ENCODE measurements at regions of chr3 and their contacts with region 1.

Region 1: GRCh38 chr3:43036621-43037423 is 57.7 kb downstream of the GASK1A start:
- DNase-seq: peak; percentile 40 to 56
- ATAC-seq: peak; percentile 91 to 97 (median 92)
- H3K4me3 ChIP-seq: no peak overlapping the region
- H3K4me3 Mint-ChIP-seq: peak overlapping the region; percentile 53
- H3K27ac ChIP-seq: peak overlapping the region; percentile 70
- H3K27ac Mint-ChIP-seq: peak overlapping the region; percentile 87 to 91
- H3K4me1 ChIP-seq: peaks cover 28% of the 10 kb centered on the region
- H3K4me1 Mint-ChIP-seq: peaks cover 31 to 32% of the 10 kb centered on the region in 2 donors
- H3K27me3 ChIP-seq: no peaks in the 10 kb centered on the region
- H3K27me3 Mint-ChIP-seq: no peaks in the 10 kb centered on the region
- CTCF ChIP-seq: no peak

Region 2: GRCh38 chr3:42957573-42957972 is 79.2 kb before region 1 on chr3:
- intact Hi-C with region 1: no loop called
- DNase-seq: no peak
- ATAC-seq: no peak
- H3K4me3 ChIP-seq: no peak overlapping the region
- H3K4me3 Mint-ChIP-seq: no peak overlapping the region
- H3K27ac ChIP-seq: no peak overlapping the region
- H3K27ac Mint-ChIP-seq: no peak overlapping the region
- H3K4me1 ChIP-seq: no peaks in the 10 kb centered on the region
- H3K4me1 Mint-ChIP-seq: peaks cover 0 to 5% of the 10 kb centered on the region in 2 donors
- H3K27me3 ChIP-seq: no peaks in the 10 kb centered on the region
- H3K27me3 Mint-ChIP-seq: peaks cover 8 to 13% of the 10 kb centered on the region in 2 donors
- CTCF ChIP-seq: no peak

Region 3: GRCh38 chr3:43024181-43024885 is 12.5 kb before region 1 on chr3:
- intact Hi-C with region 1: loop called (anchors 1 kb)
- DNase-seq: peak; percentile 41 to 78
- ATAC-seq: peak; percentile 88 to 93 (median 88)
- H3K4me3 ChIP-seq: peak overlapping the region; percentile 6
- H3K4me3 Mint-ChIP-seq: peak overlapping the region; percentile 78
- H3K27ac ChIP-seq: peak overlapping the region; percentile 65
- H3K27ac Mint-ChIP-seq: peak overlapping the region; percentile 72 to 84
- H3K4me1 ChIP-seq: peaks cover 48% of the 10 kb centered on the region
- H3K4me1 Mint-ChIP-seq: peaks cover 51 to 63% of the 10 kb centered on the region in 2 donors
- H3K27me3 ChIP-seq: no peaks in the 10 kb centered on the region
- H3K27me3 Mint-ChIP-seq: no peaks in the 10 kb centered on the region
- CTCF ChIP-seq: no peak

Measured in natural killer cell (primary cell).